H1 (cell line): ENCODE measurements at regions of chr19 and their contacts with region 1.

Region 1: GRCh38 chr19:32318880-32319520 is 26.4 kb upstream of the ZNF507 start:
- DNase-seq: peak in 1 of 2 experiments; percentile 73
- H3K4me3 ChIP-seq: no peak overlapping the region
- H3K27ac ChIP-seq: peak overlapping the region; percentile 66; the same call in 1 of the 2 replicates
- H3K4me1 ChIP-seq: peaks cover 0 to 3% (median 0%) of the 10 kb centered on the region in 4 experiments; a peak in 1 of 7 replicates
- H3K27me3 ChIP-seq: no peaks in the 10 kb centered on the region
- CTCF ChIP-seq: peak; percentile 29 to 51 (median 40)
- EP300 ChIP-seq: no peak
- POLR2A ChIP-seq: peak; percentile 48 to 62; a peak in 2 of 3 replicates
- RAD21 ChIP-seq: peak; percentile 17 to 30; a peak in 2 of 4 replicates

Region 2: GRCh38 chr19:32330213-32330857 is 11.3 kb after region 1 on chr19:
- CTCF ChIA-PET with region 1: interaction called, 31 read pairs
- POLR2A ChIA-PET with region 1: interaction called, 4 read pairs
- DNase-seq: no peak
- H3K4me3 ChIP-seq: no peak overlapping the region
- H3K27ac ChIP-seq: no peak overlapping the region
- H3K4me1 ChIP-seq: no peaks in the 10 kb centered on the region
- H3K27me3 ChIP-seq: no peaks in the 10 kb centered on the region
- CTCF ChIP-seq: no peak
- EP300 ChIP-seq: no peak
- POLR2A ChIP-seq: no peak
- RAD21 ChIP-seq: no peak

Region 3: DNA sequence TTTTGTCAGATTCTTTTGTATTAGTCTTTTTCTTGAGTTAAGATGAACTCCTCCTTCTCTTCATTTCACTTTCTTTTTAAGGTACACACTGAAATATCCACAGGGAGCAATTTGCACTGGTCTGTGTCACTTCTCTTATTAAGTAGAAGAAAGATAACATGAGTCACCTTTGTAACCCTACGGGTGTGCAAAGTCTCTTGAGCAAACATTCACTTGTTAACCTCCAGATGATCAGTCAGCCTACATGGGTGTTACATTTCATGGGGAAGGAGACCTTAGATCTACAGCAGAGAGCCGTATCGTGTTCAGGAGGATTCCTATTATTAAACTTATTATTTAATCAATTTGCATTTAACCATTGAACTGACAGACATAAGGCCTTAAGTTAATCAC is 31.5 kb after region 1 on chr19:
- CTCF ChIA-PET with region 1: interaction called, 12 read pairs
- POLR2A ChIA-PET with region 1: interaction called, 9 read pairs
- DNase-seq: no peak
- H3K4me3 ChIP-seq: no peak overlapping the region
- H3K27ac ChIP-seq: no peak overlapping the region
- H3K4me1 ChIP-seq: no peaks in the 10 kb centered on the region; a peak in 1 of 7 replicates
- H3K27me3 ChIP-seq: no peaks in the 10 kb centered on the region
- CTCF ChIP-seq: no peak
- EP300 ChIP-seq: no peak
- POLR2A ChIP-seq: no peak
- RAD21 ChIP-seq: no peak